ENCODE measurements at regions of chr10 and their contacts with region 1.

Region 1: GRCh38 chr10:61896854-61897661 is 4.4 kb upstream of the ARID5B start:
- DNase-seq: peak; percentile 82
- ATAC-seq: peak; percentile 72
- H3K4me3 Mint-ChIP-seq: peak overlapping the region; percentile 71
- H3K27ac Mint-ChIP-seq: peak overlapping the region; percentile 88
- H3K4me1 Mint-ChIP-seq: peaks cover 34% of the 10 kb centered on the region
- H3K27me3 Mint-ChIP-seq: no peaks in the 10 kb centered on the region

Region 2: DNA sequence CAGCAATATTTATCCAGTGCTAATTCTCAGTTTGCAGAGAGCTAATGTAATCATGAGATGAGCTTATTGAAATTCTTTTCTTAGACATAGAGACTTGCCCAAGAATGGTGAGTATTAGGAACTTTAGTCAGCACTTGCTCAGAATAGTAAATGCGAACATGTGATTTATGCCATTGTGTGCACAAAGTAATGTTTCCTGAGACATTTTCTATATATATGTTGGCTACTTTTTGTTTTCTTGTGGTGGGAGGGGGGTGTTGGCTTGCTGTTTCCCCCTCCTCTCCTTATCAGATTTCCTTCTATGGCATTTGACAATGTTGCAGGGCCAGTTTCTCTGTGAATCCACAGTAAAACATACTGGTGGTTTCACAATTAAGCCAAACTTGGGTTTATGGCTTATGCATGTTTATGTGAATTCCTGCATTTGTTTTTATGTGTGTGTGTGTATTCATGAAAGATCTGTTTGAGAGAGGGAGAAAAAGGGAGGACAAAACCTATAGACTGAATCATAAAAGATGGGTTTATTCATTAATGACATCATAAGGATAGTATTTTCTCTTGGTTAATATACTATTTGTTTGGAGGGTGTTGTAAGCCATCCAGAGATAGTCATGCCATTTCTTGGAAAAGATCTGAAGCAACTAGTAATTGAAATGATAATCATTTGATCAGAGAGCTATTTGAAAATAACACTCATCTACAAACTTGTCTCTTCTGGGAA is 40.7 kb after region 1 on chr10:
- CTCF ChIA-PET with region 1: interaction called, 29 read pairs
- POLR2A ChIA-PET with region 1: interaction called, 53 read pairs
- DNase-seq: no peak
- ATAC-seq: no peak
- H3K4me3 Mint-ChIP-seq: no peak overlapping the region
- H3K27ac Mint-ChIP-seq: peak overlapping the region; percentile 72
- H3K4me1 Mint-ChIP-seq: peaks cover 80% of the 10 kb centered on the region
- H3K27me3 Mint-ChIP-seq: no peaks in the 10 kb centered on the region

Region 3: GRCh38 chr10:61961278-61961677 is 64.2 kb after region 1 on chr10:
- CTCF ChIA-PET with region 1: interaction called, 22 read pairs
- POLR2A ChIA-PET with region 1: interaction called, 47 read pairs
- DNase-seq: peak; percentile 59
- ATAC-seq: peak; percentile 89
- H3K4me3 Mint-ChIP-seq: peak overlapping the region; percentile 42
- H3K27ac Mint-ChIP-seq: peak overlapping the region; percentile 82
- H3K4me1 Mint-ChIP-seq: peaks cover 68% of the 10 kb centered on the region
- H3K27me3 Mint-ChIP-seq: no peaks in the 10 kb centered on the region

Region 4: DNA sequence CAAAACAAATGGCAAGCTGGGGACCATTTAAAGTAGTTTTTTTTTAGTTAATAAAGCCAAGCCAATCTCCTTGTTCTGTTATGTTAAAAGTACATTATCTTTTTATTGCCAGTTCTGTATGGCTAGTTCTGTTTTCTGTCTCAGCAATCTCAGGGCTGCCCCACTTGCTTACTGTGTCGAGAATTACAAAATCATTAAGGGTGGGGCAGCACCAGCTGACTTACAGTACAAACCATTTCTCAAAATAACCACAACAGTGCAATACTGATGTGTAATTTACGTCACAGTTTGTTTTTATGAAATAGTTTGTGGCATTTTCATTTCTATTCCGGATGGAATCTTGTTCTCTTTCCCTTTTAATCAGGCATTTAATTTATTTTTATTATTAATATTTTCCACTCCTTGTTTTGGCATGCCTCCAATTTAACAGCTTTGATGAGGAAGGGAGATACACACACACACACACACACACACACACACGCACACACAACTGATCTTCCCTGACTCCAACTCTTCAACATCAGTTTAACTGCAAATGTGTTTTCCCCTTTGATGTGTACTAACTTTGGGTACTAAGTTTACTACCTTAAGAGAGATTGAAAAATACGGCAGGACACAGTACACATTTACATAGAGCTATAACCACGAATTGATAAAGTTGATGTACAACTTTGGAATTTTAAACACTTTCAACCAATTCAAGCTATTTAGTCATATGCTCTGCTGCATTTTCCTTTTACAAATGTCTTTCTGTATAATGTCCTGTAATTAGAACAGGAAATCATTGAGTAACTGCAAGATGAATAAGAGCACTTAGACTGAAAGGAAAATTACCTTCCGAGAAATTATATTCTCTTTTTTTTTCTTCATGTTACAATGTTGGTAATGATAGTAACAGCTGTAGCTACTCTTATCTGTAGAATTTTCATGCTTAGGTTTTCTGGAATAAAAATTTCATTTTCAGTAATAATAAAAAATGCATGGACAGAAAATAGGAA is 95.9 kb after region 1 on chr10:
- CTCF ChIA-PET with region 1: interaction called, 20 read pairs
- POLR2A ChIA-PET with region 1: interaction called, 58 read pairs
- DNase-seq: peak; percentile 49
- ATAC-seq: peak; percentile 49
- H3K4me3 Mint-ChIP-seq: peak overlapping the region; percentile 50
- H3K27ac Mint-ChIP-seq: peak overlapping the region; percentile 75
- H3K4me1 Mint-ChIP-seq: peaks cover 44% of the 10 kb centered on the region
- H3K27me3 Mint-ChIP-seq: no peaks in the 10 kb centered on the region

Region 5: DNA sequence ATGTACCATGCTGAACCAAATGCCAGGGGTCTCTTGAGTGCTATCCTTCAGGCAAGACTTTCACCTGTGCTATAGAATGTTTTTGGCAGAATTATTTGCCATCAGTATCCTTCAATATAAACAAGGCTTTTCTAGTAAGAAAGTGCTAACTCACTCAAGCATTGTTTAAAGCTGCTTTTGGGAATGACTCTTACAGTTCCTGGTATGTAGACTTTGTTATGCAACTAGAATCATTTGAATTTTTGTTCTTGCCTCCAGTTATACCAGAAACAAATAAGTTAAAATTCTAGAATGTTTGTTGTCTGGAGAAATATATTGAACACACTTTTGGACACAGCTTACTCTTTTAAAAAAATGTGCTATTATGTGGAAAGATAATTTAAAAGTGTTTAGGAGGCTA is 411.0 kb after region 1 on chr10:
- CTCF ChIA-PET with region 1: no interaction called
- POLR2A ChIA-PET with region 1: no interaction called
- DNase-seq: no peak
- ATAC-seq: no peak
- H3K4me3 Mint-ChIP-seq: no peak overlapping the region
- H3K27ac Mint-ChIP-seq: no peak overlapping the region
- H3K4me1 Mint-ChIP-seq: no peaks in the 10 kb centered on the region
- H3K27me3 Mint-ChIP-seq: no peaks in the 10 kb centered on the region